ENCODE measurements at regions of chr3 and their contacts with region 1.

Region 1: GRCh38 chr3:191030491-191030890 is 168.0 kb upstream of the GMNC start:
- ATAC-seq: no peak
- H3K4me3 ChIP-seq: no peak overlapping the region
- H3K27ac ChIP-seq: no peak overlapping the region
- H3K4me1 ChIP-seq: no peaks in the 10 kb centered on the region

Region 2: GRCh38 chr3:190811775-190812480 is 218.6 kb before region 1 on chr3:
- in situ Hi-C with region 1: loop called in 1 of 9 experiments (anchors 25 kb)
- ATAC-seq: peak in 6 of 8 experiments; percentile 26 to 81 (median 60)
- H3K4me3 ChIP-seq: no peak overlapping the region
- H3K27ac ChIP-seq: no peak overlapping the region
- H3K4me1 ChIP-seq: no peaks in the 10 kb centered on the region

Region 3: DNA sequence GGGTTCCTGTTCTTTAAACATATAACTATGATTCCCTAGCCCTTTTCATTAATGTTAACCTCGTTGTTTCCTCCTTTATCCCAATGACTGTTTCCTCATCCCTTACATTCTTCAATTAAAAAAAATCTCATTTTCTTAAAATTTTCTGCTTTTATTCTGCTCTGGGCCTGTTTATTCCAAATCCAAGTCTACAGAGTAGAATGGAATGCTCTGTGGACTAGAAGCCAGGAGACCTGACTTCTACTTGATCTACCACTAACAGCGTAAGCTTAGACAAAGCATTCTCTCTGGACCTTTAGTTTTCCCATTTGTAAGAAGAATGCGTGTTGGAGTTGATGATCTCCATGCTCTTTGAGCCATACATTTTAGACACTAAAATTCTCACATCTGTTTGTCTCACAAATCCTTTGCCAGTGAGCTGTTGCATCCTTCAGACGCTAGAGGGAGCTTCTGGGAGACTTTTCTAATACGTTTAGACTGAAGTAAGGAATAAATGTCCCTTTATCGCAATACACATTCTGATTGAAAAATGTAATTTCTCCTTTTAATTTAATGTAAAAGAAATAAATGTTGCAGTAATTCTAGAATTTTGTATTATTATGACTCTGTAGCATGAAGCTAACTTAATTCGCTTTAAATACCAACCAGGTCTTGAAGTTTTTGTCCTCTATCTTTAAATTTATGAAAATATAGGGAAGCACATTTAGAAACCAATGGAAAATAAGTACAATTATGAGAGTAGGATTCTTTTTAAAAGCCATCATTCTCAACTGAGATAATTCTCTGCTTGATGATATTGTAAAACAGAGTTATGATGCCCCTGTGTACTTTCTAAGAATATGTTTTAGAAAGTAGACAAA is 146.3 kb before region 1 on chr3:
- in situ Hi-C with region 1: loop called in 1 of 9 experiments (anchors 25 kb)
- ATAC-seq: peak in 5 of 8 experiments; percentile 34 to 75 (median 60)
- H3K4me3 ChIP-seq: no peak overlapping the region
- H3K27ac ChIP-seq: no peak overlapping the region
- H3K4me1 ChIP-seq: no peaks in the 10 kb centered on the region